T-cell (primary cell): ENCODE measurements at regions of chr5 and their contacts with region 1.

Region 1: DNA sequence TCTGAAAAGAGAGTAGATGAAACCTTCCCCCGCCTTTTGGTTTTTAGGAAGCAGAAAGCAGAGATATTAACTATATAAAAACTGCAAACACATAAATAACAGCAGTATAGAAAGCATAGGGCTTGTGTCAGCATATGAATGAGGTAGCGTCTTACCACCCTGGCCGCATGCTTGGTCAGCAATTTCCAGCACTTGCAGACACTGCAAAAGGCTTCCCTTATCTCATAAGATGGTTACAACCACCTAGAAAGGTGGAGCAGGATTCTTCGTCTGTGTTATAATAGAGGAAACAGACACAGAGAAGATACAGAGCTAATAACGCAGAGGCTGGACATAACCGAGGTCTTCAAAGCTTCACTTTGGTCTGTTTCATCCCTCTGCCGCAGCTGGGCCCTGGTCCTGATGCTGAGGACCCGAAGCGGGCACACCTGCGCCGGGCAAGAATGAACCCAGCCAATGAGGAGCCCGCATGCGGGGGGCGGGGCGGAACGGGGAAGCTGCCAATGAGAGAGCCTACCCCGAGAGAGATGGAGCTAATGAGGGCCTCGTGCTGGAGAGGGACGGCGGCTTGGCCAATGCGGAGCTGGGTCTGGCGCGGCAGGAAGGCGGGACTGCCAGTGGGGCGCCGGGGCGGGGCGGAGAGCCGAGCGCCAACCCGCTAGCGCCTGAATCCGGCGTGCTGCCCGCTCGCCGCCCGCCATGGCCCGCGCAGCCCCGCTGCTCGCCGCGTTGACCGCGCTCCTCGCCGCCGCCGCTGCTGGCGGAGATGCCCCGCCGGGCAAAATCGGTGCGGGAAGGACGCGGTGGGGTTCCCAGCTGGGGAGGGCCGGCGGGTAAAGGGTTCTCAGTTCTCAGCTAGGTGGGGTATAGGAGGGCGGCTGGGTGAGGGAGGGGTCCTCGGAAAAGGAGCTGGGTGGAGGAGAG is at the start of gene PCYOX1L:
- DNase-seq: peak; percentile 73 to 98 (median 92)
- ATAC-seq: peak; percentile 97 to 99 (median 98)
- H3K4me3 ChIP-seq: peak within 1 kb of the TSS; percentile 64 to 83
- H3K4me3 Mint-ChIP-seq: peak within 1 kb of the TSS; percentile 93 to 95 (median 94)
- H3K27ac ChIP-seq: peak within 1 kb of the TSS; percentile 64
- H3K27ac Mint-ChIP-seq: peak within 1 kb of the TSS; percentile 92 to 98
- H3K4me1 ChIP-seq: peaks cover 22 to 44% of the 10 kb centered on the region in 2 experiments
- H3K4me1 Mint-ChIP-seq: peaks cover 68 to 74% (median 71%) of the 10 kb centered on the region in 3 donors
- H3K27me3 ChIP-seq: no peaks in the 10 kb centered on the region
- H3K27me3 Mint-ChIP-seq: no peaks in the 10 kb centered on the region
- total RNA-seq, gene PCYOX1L: 26.9 to 40.2 (median 35.0) TPM

Region 2: GRCh38 chr5:149345147-149345875 is 12.3 kb before region 1 on chr5 and contains the start of gene GRPEL2:
- CTCF ChIA-PET with region 1: interaction called, 3 to 43 read pairs
- POLR2A ChIA-PET with region 1: interaction called, 4 to 27 read pairs
- DNase-seq: peak; percentile 60 to 91 (median 73)
- ATAC-seq: peak; percentile 69 to 77 (median 76)
- H3K4me3 ChIP-seq: peak within 1 kb of the TSS; percentile 78 to 85
- H3K4me3 Mint-ChIP-seq: peak within 1 kb of the TSS; percentile 95 to 96 (median 95)
- H3K27ac ChIP-seq: peak within 1 kb of the TSS; percentile 74
- H3K27ac Mint-ChIP-seq: peak within 1 kb of the TSS; percentile 91 to 97
- H3K4me1 ChIP-seq: peaks cover 39 to 54% of the 10 kb centered on the region in 2 experiments
- H3K4me1 Mint-ChIP-seq: peaks cover 62 to 70% (median 64%) of the 10 kb centered on the region in 3 donors
- H3K27me3 ChIP-seq: no peaks in the 10 kb centered on the region
- H3K27me3 Mint-ChIP-seq: no peaks in the 10 kb centered on the region
- total RNA-seq, gene GRPEL2: 14.2 to 38.7 (median 31.5) TPM

Region 3: GRCh38 chr5:149387081-149387631 is 29.5 kb after region 1 on chr5:
- CTCF ChIA-PET with region 1: no interaction called
- POLR2A ChIA-PET with region 1: no interaction called
- DNase-seq: no peak
- ATAC-seq: no peak
- H3K4me3 ChIP-seq: no peak overlapping the region
- H3K4me3 Mint-ChIP-seq: no peak overlapping the region
- H3K27ac ChIP-seq: no peak overlapping the region
- H3K27ac Mint-ChIP-seq: no peak overlapping the region
- H3K4me1 ChIP-seq: peaks cover 0 to under 1% of the 10 kb centered on the region in 2 experiments
- H3K4me1 Mint-ChIP-seq: peaks cover 0 to 4% (median under 1%) of the 10 kb centered on the region in 3 donors
- H3K27me3 ChIP-seq: peaks cover 0 to 5% of the 10 kb centered on the region in 2 experiments
- H3K27me3 Mint-ChIP-seq: no peaks in the 10 kb centered on the region

Region 4: GRCh38 chr5:149543361-149544027 is 185.9 kb after region 1 on chr5:
- CTCF ChIA-PET with region 1: no interaction called
- POLR2A ChIA-PET with region 1: no interaction called
- DNase-seq: no peak
- ATAC-seq: no peak
- H3K4me3 ChIP-seq: no peak overlapping the region
- H3K4me3 Mint-ChIP-seq: peak overlapping the region in 2 of 3 donors; percentile 31 to 39
- H3K27ac ChIP-seq: no peak overlapping the region
- H3K27ac Mint-ChIP-seq: no peak overlapping the region
- H3K4me1 ChIP-seq: peaks cover 23 to 46% of the 10 kb centered on the region in 2 experiments
- H3K4me1 Mint-ChIP-seq: peaks cover 69 to 80% (median 78%) of the 10 kb centered on the region in 3 donors
- H3K27me3 ChIP-seq: no peaks in the 10 kb centered on the region
- H3K27me3 Mint-ChIP-seq: no peaks in the 10 kb centered on the region